ENCODE measurements at regions of chr14 and their contacts with region 1.

Region 1: DNA sequence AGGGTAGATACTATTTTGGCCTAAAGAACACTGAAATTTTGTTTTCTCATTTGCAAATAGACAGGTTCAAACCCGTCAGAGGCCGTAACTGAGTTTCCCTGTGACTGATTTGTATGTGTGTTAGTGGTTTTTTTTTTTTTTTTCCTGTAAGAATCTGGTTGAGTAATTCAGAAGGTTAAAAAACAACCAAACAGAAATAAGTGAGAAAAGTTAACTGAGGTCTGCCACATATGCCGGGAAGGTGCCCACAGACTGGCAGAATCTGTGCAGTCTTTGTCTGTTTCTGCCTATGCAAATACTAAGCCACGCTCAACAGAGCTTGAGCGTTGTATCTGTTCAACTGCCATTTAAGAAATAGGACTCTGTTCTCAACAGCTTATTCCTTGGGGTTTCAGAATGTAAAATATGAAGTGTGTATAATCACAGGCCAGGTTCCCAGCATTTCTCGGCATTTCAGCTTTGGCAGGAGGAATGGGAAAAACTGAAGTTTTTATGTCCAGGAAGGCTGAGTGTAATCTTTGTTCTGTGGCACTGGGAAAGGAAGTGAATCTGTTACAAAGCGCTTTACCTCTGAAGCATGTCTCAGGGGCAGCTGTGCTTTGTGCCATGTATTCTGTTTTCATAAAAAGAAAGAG is 181.9 kb downstream of the PRKCH start:
- DNase-seq: peak; percentile 92
- H3K4me3 Mint-ChIP-seq: peak overlapping the region; percentile 66
- H3K27ac Mint-ChIP-seq: peak overlapping the region; percentile 100
- H3K4me1 Mint-ChIP-seq: peaks cover 97% of the 10 kb centered on the region
- H3K27me3 Mint-ChIP-seq: no peaks in the 10 kb centered on the region

Region 2: DNA sequence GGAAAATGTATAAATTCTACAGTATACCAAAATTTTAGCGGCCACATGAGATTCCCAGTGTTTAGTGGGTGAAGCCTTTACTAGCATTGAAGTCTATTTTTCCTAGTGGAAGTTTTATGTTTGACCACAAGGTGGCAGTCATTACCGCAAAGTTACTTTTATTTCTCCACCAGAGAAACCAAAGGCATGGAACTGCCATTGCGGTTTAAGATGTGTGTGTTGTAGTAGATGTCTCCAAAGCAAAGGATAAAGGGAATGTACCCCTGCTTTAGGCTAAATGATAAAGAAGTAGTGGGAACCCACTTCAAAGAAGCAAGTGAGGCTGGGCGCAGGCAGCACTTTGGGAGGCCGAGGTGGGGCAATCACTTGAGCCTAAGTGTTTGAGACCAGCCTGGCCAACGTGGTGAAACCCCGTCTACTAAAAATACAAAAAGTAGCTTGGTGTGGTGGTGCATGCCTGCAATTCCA is 41.4 kb before region 1 on chr14:
- CTCF ChIA-PET with region 1: no interaction called
- intact Hi-C with region 1: loop called (anchors 1 kb)
- DNase-seq: peak; percentile 60
- H3K4me3 Mint-ChIP-seq: peak overlapping the region; percentile 27
- H3K27ac Mint-ChIP-seq: peak overlapping the region; percentile 93
- H3K4me1 Mint-ChIP-seq: peaks cover 71% of the 10 kb centered on the region
- H3K27me3 Mint-ChIP-seq: no peaks in the 10 kb centered on the region

Region 3: GRCh38 chr14:61537563-61538463 is 34.5 kb after region 1 on chr14:
- CTCF ChIA-PET with region 1: interaction called, 3 read pairs
- intact Hi-C with region 1: loop called (anchors 1 kb)
- DNase-seq: peak; percentile 79
- H3K4me3 Mint-ChIP-seq: no peak overlapping the region
- H3K27ac Mint-ChIP-seq: peak overlapping the region; percentile 92
- H3K4me1 Mint-ChIP-seq: peaks cover 84% of the 10 kb centered on the region
- H3K27me3 Mint-ChIP-seq: no peaks in the 10 kb centered on the region

Region 4: DNA sequence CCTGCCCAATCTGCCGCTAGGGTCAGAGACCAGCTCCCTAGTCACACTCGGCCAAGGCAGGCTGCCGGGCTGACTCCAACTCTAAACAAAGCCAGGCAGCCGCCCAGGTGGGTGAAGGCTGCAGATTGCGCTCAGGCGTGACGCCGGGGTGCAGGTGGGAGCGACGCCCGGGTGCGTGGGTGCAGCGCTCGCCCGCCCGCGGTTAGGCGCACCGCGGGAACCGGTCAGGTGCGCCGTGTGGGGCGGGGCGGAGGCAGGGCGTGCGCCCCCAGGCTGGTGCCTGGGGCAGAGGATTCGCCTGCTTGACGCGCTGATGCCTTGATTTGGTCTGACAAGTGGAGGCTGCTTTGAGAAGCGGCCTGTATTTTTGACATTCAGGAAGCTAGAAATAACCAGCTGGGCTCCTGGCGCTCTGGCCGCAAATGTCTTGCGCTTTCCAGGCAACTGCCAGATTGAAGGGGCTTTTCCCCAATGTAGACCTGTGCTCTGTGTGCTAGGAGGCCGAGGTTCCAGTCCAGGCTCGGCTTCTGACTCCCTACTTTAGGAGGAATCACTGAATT is 65.4 kb after region 1 on chr14:
- CTCF ChIA-PET with region 1: interaction called, 3 read pairs
- intact Hi-C with region 1: loop called (anchors 1 kb)
- DNase-seq: peak; percentile 71
- H3K4me3 Mint-ChIP-seq: peak overlapping the region; percentile 73
- H3K27ac Mint-ChIP-seq: peak overlapping the region; percentile 91
- H3K4me1 Mint-ChIP-seq: peaks cover 87% of the 10 kb centered on the region
- H3K27me3 Mint-ChIP-seq: no peaks in the 10 kb centered on the region

Region 5: DNA sequence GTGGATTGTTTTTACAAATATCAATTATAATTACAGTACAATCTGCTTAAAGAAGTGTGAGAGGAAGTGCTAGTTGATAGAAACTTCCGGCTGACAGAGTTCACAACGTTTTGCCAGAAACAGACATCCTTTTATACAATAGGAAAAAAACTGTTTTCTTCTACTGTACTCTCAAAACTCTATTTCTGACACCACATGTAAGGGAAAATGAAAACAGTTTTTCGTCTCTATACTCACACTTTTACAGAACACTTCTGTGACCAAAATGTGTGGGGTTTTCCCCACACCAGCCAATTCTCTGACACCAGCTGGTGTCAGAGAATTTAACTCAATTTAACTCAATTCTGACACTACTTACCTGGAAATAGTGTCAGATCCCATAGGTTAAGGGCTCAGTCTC is 167.8 kb after region 1 on chr14:
- CTCF ChIA-PET with region 1: no interaction called
- intact Hi-C with region 1: loop called (anchors 2 kb)
- DNase-seq: peak; percentile 69
- H3K4me3 Mint-ChIP-seq: peak overlapping the region; percentile 35
- H3K27ac Mint-ChIP-seq: no peak overlapping the region
- H3K4me1 Mint-ChIP-seq: peaks cover 25% of the 10 kb centered on the region
- H3K27me3 Mint-ChIP-seq: no peaks in the 10 kb centered on the region